Stomach (tissue), 19 donors: ENCODE measurements at regions of chr3 and their contacts with region 1.

Region 1: DNA sequence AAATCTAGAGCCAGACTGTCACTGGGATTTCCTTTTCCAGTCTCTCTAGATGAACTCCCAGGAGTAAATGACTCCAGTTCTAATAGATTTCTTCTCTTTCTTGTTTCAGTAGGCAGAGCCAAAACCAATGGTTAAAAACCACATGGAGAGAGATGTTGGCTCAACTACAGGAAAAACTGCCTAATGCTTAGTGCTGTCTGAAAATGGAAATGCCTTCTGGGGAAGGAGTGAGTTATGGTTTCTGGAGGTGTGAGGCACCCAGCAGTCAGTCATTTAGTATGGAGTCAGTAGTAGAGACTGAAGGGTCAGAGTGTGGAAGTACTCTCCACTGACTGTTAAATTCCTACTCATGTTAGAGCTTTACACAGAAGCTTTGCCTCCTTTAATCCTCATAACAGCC is 136.7 kb downstream of the CCNL1 start:
- DNase-seq: no peak
- H3K4me3 ChIP-seq: no peak overlapping the region
- H3K27ac ChIP-seq: no peak overlapping the region
- H3K4me1 ChIP-seq: no peaks in the 10 kb centered on the region
- H3K27me3 ChIP-seq: no peaks in the 10 kb centered on the region
- CTCF ChIP-seq: no peak
- EP300 ChIP-seq: no peak
- POLR2A ChIP-seq: no peak

Region 2: DNA sequence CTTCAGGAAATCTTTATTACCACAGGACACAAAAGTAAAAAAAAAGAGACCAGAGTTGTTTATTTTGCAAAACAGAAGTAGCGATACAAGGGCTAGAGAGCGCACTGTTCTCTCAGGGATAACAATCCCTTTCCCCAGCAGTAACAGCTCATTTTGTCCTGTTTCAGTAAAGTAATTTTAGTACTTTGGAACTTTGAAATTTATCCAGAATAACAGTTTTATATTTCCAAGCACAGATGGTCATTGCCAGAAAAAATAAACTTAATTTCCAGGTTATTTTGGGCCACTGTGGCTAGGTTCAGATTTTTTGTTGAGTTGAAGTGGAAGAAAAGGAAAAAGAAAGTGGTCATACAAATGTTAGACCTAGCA is 179.8 kb before region 1 on chr3:
- intact Hi-C with region 1: no loop called
- DNase-seq: no peak
- H3K4me3 ChIP-seq: no peak overlapping the region
- H3K27ac ChIP-seq: no peak overlapping the region
- H3K4me1 ChIP-seq: no peaks in the 10 kb centered on the region
- H3K27me3 ChIP-seq: no peaks in the 10 kb centered on the region
- CTCF ChIP-seq: no peak
- EP300 ChIP-seq: no peak
- POLR2A ChIP-seq: no peak

Region 3: GRCh38 chr3:157064402-157064801 is 41.2 kb after region 1 on chr3:
- intact Hi-C with region 1: no loop called
- DNase-seq: no peak
- H3K4me3 ChIP-seq: no peak overlapping the region
- H3K27ac ChIP-seq: no peak overlapping the region
- H3K4me1 ChIP-seq: peaks cover 0 to 11% (median 5%) of the 10 kb centered on the region in 4 donors
- H3K27me3 ChIP-seq: no peaks in the 10 kb centered on the region
- CTCF ChIP-seq: no peak
- EP300 ChIP-seq: no peak
- POLR2A ChIP-seq: no peak

Region 4: GRCh38 chr3:157130467-157131251 is 107.4 kb after region 1 on chr3:
- intact Hi-C with region 1: loop called (anchors 5 kb)
- DNase-seq: peak; percentile 63 to 86
- H3K4me3 ChIP-seq: peak overlapping the region in 2 of 4 donors; percentile 1 to 26
- H3K27ac ChIP-seq: peak overlapping the region; percentile 80 to 92 (median 85)
- H3K4me1 ChIP-seq: peaks cover 49 to 84% (median 68%) of the 10 kb centered on the region in 4 donors
- H3K27me3 ChIP-seq: no peaks in the 10 kb centered on the region
- CTCF ChIP-seq: peak in 5 of 7 experiments; percentile 22 to 60 (median 43)
- EP300 ChIP-seq: no peak
- POLR2A ChIP-seq: no peak

Region 5: GRCh38 chr3:157174649-157175498 is 151.6 kb after region 1 on chr3:
- intact Hi-C with region 1: no loop called
- DNase-seq: peak; percentile 99 to 100
- H3K4me3 ChIP-seq: peak overlapping the region; percentile 39 to 59 (median 48)
- H3K27ac ChIP-seq: peak overlapping the region; percentile 93 to 100 (median 99)
- H3K4me1 ChIP-seq: peaks cover 11 to 26% (median 18%) of the 10 kb centered on the region in 4 donors
- H3K27me3 ChIP-seq: no peaks in the 10 kb centered on the region
- CTCF ChIP-seq: no peak
- EP300 ChIP-seq: peak; percentile 94
- POLR2A ChIP-seq: peak in 2 of 4 donors; percentile 90 to 93

Region 6: GRCh38 chr3:157257091-157257490 is 233.9 kb after region 1 on chr3:
- intact Hi-C with region 1: no loop called
- DNase-seq: no peak
- H3K4me3 ChIP-seq: no peak overlapping the region
- H3K27ac ChIP-seq: no peak overlapping the region
- H3K4me1 ChIP-seq: no peaks in the 10 kb centered on the region
- H3K27me3 ChIP-seq: no peaks in the 10 kb centered on the region
- CTCF ChIP-seq: no peak
- EP300 ChIP-seq: no peak
- POLR2A ChIP-seq: no peak